A673 (cell line): ENCODE measurements at regions of chr18 and their contacts with region 1.

Region 1: DNA sequence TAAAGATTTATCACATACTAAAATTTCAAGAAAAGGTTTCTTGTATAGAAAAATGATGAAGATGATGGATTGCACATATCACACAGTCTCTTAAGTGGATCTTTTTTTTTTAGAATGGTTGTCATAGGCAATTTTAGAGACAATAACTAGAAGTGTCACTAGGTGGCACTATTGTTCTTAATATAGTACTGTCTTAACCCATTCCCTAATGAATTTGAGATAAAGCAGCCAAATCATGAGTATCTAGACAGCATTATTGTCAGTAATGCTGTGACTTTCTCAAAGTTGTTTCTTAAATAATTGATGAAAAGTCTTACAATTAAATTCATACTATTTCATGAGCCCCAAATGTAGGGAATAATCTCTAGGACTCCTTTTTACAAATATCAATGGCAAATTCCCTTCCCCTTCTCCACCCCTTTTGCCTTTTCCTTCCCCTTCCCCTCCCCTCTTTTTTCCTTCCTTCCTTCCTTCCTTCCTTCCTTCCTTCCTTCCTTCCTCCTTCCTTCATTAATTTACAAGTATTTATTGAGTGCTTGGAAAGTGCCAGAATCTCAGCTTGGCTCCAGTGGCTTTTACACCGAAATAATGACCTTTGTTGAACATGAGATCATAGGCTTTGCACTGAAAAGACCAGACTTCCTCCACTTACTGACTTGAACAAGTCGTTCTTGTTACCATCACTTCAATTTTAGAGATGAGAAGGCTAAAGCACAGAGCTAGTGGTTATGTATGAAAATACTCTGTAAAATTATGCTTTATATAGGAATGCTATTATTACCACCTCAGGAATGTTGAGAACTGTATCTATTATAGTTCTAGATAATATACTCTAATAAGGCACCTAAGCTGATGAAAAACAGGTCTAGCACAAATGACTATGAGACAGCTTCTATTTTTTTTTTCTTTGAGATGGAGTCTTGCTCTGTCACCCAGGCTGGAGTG is 19.8 kb downstream of the MYL12B start:
- DNase-seq: peak; percentile 95
- H3K4me3 ChIP-seq: no peak overlapping the region
- H3K27ac ChIP-seq: peak overlapping the region; percentile 96
- H3K4me1 ChIP-seq: peaks cover 58% of the 10 kb centered on the region
- H3K27me3 ChIP-seq: no peaks in the 10 kb centered on the region
- CTCF ChIP-seq: peak; percentile 68

Region 2: DNA sequence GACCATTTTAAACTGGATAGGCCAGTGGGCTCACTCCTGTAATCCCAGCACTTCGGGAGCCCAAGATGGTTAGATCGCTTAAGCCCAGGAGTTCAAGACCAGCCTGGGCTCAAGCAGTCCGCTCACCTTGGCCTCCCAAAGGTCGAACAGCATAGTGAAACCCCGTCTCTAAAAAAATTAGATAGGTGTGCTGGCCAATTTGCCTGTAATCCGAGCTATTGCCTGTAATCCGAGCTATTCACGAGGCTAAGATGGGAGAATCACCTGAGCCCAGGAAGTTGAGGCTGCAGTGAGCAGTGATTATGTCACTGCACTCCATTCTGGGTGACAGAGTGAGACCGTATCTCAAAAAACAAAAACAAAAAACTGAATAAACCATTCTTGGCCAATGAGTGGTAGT is 487.6 kb before region 1 on chr18:
- CTCF ChIA-PET with region 1: no interaction called
- POLR2A ChIA-PET with region 1: interaction called, 11 read pairs
- intact Hi-C with region 1: no loop called
- DNase-seq: no peak
- H3K4me3 ChIP-seq: no peak overlapping the region
- H3K27ac ChIP-seq: no peak overlapping the region
- H3K4me1 ChIP-seq: no peaks in the 10 kb centered on the region
- H3K27me3 ChIP-seq: no peaks in the 10 kb centered on the region
- CTCF ChIP-seq: no peak

Region 3: GRCh38 chr18:3245853-3246634 is 35.7 kb before region 1 on chr18:
- CTCF ChIA-PET with region 1: no interaction called
- POLR2A ChIA-PET with region 1: no interaction called
- intact Hi-C with region 1: no loop called
- DNase-seq: peak; percentile 94
- H3K4me3 ChIP-seq: peak overlapping the region; percentile 75
- H3K27ac ChIP-seq: peak overlapping the region; percentile 96
- H3K4me1 ChIP-seq: peaks cover 27% of the 10 kb centered on the region
- H3K27me3 ChIP-seq: no peaks in the 10 kb centered on the region
- CTCF ChIP-seq: peak; percentile 97

Region 4: GRCh38 chr18:3454365-3455089 is 172.8 kb after region 1 on chr18:
- CTCF ChIA-PET with region 1: interaction called, 3 read pairs
- POLR2A ChIA-PET with region 1: interaction called, 6 read pairs
- intact Hi-C with region 1: loop called (anchors 2 kb)
- DNase-seq: peak; percentile 87
- H3K4me3 ChIP-seq: peak overlapping the region; percentile 91
- H3K27ac ChIP-seq: peak overlapping the region; percentile 96
- H3K4me1 ChIP-seq: peaks cover 38% of the 10 kb centered on the region
- H3K27me3 ChIP-seq: no peaks in the 10 kb centered on the region
- CTCF ChIP-seq: peak; percentile 78

Region 5: GRCh38 chr18:3604498-3605408 is 323.0 kb after region 1 on chr18:
- CTCF ChIA-PET with region 1: interaction called, 3 read pairs
- POLR2A ChIA-PET with region 1: interaction called, 3 read pairs
- intact Hi-C with region 1: loop called (anchors 2 kb)
- DNase-seq: peak; percentile 61
- H3K4me3 ChIP-seq: peak overlapping the region; percentile 40
- H3K27ac ChIP-seq: peak overlapping the region; percentile 100
- H3K4me1 ChIP-seq: peaks cover 45% of the 10 kb centered on the region
- H3K27me3 ChIP-seq: no peaks in the 10 kb centered on the region
- CTCF ChIP-seq: no peak

Region 6: GRCh38 chr18:3747176-3747973 is 465.6 kb after region 1 on chr18:
- CTCF ChIA-PET with region 1: interaction called, 3 read pairs
- POLR2A ChIA-PET with region 1: interaction called, 20 read pairs
- intact Hi-C with region 1: loop called (anchors 1 kb)
- DNase-seq: no peak
- H3K4me3 ChIP-seq: no peak overlapping the region
- H3K27ac ChIP-seq: peak overlapping the region; percentile 39
- H3K4me1 ChIP-seq: peaks cover 10% of the 10 kb centered on the region
- H3K27me3 ChIP-seq: no peaks in the 10 kb centered on the region
- CTCF ChIP-seq: no peak

Region 7: DNA sequence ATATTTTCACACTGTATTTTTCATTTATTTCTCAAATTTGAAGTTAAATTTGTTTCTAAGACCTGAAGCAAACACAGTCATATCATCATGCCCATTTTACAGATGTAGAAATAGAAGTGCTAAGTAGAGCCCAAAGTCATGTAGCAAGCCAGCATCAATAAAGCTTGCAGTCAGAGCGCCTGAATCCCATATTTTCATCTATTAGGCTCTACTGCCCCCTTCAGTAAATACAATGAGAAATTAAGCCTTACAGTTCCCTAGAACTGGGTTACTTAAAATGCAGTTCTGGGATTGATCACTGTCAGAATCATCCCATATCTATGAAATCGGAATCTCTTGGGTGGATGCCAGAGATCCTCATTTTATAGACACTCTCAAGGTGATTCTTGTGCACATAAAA is 588.1 kb after region 1 on chr18:
- CTCF ChIA-PET with region 1: interaction called, 9 read pairs
- POLR2A ChIA-PET with region 1: no interaction called
- intact Hi-C with region 1: loop called (anchors 2 kb)
- DNase-seq: peak; percentile 90
- H3K4me3 ChIP-seq: peak overlapping the region; percentile 10
- H3K27ac ChIP-seq: peak overlapping the region; percentile 88
- H3K4me1 ChIP-seq: peaks cover 74% of the 10 kb centered on the region
- H3K27me3 ChIP-seq: no peaks in the 10 kb centered on the region
- CTCF ChIP-seq: peak; percentile 72

Region 8: DNA sequence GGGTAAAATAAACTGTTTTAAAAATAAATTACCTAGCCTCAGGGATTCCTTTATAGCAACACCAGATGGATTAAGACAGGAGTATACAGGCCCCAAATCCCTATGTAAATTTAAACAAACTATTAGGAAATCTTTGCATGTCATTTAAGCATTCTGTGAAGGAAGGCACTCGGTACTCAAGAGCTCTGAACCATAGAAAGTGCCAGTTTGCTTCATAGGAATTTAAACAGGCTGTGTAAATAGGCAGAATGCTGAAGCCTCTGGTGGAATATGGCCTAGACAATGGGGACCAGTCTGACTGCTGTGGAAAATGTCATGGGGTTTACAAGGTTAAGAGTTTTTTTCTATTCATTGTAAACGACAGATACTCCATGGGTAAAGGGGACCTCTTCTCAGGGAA is 796.0 kb after region 1 on chr18:
- CTCF ChIA-PET with region 1: no interaction called
- POLR2A ChIA-PET with region 1: no interaction called
- intact Hi-C with region 1: no loop called
- DNase-seq: no peak
- H3K4me3 ChIP-seq: no peak overlapping the region
- H3K27ac ChIP-seq: no peak overlapping the region
- H3K4me1 ChIP-seq: no peaks in the 10 kb centered on the region
- H3K27me3 ChIP-seq: no peaks in the 10 kb centered on the region
- CTCF ChIP-seq: no peak

Region 9: GRCh38 chr18:4264347-4264791 is 982.6 kb after region 1 on chr18:
- CTCF ChIA-PET with region 1: no interaction called
- POLR2A ChIA-PET with region 1: no interaction called
- intact Hi-C with region 1: loop called (anchors 5 kb)
- DNase-seq: peak; percentile 83
- H3K4me3 ChIP-seq: peak overlapping the region; percentile 27
- H3K27ac ChIP-seq: peak overlapping the region; percentile 79
- H3K4me1 ChIP-seq: peaks cover 62% of the 10 kb centered on the region
- H3K27me3 ChIP-seq: no peaks in the 10 kb centered on the region
- CTCF ChIP-seq: no peak